GM10248 (cell line): ENCODE measurements at regions of chr4 and their contacts with region 1.

Region 1: GRCh38 chr4:85381968-85382367 is 93.0 kb upstream of the ARHGAP24 start:
- DNase-seq: no peak
- CTCF ChIP-seq: no peak

Region 2: GRCh38 chr4:85126991-85127591 is 254.9 kb before region 1 on chr4:
- CTCF ChIA-PET with region 1: no interaction called
- POLR2A ChIA-PET with region 1: no interaction called
- DNase-seq: no peak
- CTCF ChIP-seq: no peak

Region 3: DNA sequence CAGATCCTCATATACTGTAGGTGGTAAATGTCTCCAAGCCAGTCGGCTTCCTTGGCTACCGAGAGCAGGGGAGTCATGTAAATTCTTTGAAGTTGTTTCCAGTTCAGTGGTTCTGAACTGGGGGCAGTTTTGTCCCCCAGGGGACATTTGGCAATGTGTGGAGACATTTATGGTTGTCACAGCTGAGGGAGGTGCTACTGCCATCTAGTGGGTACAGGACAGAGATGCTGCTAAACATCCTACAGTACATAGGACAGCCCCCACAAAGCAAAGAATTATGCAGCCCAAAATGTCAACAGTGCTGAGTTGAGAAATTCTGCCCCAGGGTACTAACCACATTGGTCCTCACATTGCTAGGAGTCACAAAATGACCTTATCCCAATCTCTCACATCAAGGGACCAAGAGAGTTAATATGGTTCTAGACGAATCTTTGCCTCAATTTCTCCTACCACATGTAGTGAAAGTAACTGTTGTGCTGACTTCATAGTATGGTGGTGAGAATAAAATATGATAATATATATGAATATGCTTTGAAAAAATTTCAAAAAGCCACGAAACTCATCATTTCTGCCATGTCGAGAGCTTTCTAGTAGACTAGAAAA is 11.4 kb before region 1 on chr4:
- CTCF ChIA-PET with region 1: interaction called, 60 read pairs
- POLR2A ChIA-PET with region 1: no interaction called
- DNase-seq: no peak
- CTCF ChIP-seq: peak; percentile 69

Region 4: DNA sequence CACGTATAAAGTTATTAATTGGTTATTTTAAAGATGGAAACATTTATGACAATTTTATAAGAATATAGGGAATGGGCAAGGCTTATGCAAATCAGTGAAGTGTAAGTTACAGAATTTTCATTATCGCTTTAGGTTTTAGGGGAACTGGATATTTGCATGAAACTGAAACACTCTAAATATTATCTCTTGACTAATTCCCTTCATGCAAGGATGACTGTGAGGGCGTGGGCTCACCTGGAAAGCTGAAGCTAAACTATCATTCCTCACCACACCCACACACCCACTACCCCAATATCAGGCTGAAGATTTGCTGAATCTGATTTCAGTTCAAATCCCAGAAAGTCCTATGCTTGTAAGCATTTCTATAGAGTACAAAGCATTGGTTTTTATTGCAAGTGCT is 11.2 kb after region 1 on chr4:
- CTCF ChIA-PET with region 1: no interaction called
- POLR2A ChIA-PET with region 1: no interaction called
- DNase-seq: no peak
- CTCF ChIP-seq: no peak